Activated T-helper 1 cell treated with anti-CD3 and anti-CD28 coated beads, Interleukin-12 subunit alpha, Interleukin-12 subunit beta, Interleukin-2, Interleukin-4 antibody, amounts not matched to agents 30 ng/mL and 10 ng/mL and 1 ng/mL, durations not matched to agents 14 hours and 24 hours and 36 hours (primary cell): ENCODE measurements at regions of chr9 and their contacts with region 1.

Region 1: GRCh38 chr9:85425153-85425611 is 316.6 kb downstream of the AGTPBP1 start:
- DNase-seq: peak; percentile 30
- H3K4me3 Mint-ChIP-seq: no peak overlapping the region
- H3K27ac Mint-ChIP-seq: no peak overlapping the region
- H3K4me1 Mint-ChIP-seq: peaks cover 6% of the 10 kb centered on the region
- H3K27me3 Mint-ChIP-seq: peaks cover 9% of the 10 kb centered on the region

Region 2: DNA sequence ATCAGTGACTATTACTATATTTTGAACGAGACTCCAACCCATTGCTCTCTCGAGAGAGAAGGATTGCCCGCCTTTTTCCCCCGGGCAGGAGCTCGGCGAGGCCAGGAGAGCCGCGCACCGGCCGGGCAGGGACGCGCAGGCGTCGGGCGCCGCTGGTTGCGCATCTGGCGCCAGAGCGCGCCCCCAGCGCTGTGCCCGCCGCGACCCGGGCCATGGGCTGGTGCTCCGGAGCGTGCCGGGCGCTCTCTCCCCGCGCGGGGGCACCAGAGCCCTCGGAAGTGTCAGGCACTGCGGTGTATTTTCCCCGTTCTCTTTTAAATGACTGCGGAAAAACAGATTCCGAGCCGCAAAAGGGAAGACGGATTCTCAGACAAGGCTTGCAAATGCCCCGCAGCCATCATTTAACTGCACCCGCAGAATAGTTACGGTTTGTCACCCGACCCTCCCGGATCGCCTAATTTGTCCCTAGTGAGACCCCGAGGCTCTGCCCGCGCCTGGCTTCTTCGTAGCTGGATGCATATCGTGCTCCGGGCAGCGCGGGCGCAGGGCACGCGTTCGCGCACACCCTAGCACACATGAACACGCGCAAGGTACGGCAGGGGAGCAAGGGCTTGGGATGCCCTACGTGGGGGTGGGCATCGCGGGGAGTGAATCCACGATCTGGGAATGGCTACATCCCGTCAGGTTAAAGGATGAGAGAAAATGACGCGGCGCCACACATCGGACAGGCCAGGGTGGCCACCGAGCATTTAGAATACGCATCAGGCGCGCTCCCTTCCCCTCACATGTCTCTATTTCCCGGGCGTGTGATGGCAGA is 756.8 kb before region 1 on chr9:
- intact Hi-C with region 1: loop called (anchors 10 kb)
- DNase-seq: peak; percentile 21
- H3K4me3 Mint-ChIP-seq: peak overlapping the region; percentile 70
- H3K27ac Mint-ChIP-seq: peak overlapping the region; percentile 38
- H3K4me1 Mint-ChIP-seq: peaks cover 16% of the 10 kb centered on the region
- H3K27me3 Mint-ChIP-seq: peaks cover 56% of the 10 kb centered on the region

Region 3: DNA sequence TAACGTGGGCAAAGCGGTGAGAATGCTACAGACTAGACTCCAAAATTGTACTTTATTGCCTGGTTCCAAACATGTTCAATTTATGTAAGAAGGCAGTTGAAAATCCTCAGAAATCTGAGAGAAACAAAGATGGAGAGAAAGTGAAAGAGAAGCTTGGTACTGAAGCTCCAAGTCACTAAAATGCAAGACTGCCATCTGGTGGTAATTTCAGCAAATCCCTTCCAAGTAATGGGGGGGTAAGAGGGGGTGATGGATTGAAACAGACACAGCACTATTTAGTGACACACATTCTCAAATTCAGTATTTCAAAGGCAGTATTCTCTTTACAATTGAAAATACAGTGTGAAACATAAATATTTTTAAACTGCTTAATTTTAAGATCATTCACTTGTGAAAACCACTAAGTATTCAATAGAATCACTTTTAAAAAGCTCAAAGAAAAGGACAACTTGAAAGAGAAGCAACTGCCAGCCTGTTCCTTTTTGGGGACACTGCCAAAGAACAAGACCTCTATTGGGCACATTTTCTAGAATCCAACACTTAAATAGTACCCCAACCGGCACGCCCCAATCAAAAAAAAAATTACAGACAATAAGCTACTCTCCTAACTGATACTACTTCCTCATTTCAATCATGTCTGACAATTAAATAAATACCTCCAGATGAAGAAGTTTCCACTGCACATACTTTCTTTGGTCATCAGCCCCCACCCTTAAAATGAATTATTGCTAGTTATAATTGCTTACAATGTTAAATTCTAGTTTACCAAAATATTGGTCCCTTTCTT is 185.1 kb after region 1 on chr9:
- intact Hi-C with region 1: loop called (anchors 1 kb)
- DNase-seq: peak; percentile 22
- H3K4me3 Mint-ChIP-seq: no peak overlapping the region
- H3K27ac Mint-ChIP-seq: no peak overlapping the region
- H3K4me1 Mint-ChIP-seq: peaks cover 10% of the 10 kb centered on the region
- H3K27me3 Mint-ChIP-seq: no peaks in the 10 kb centered on the region